ENCODE measurements at regions of chrX and their contacts with region 1.

Region 1: GRCh38 chrX:77962068-77962902 is 7.2 kb downstream of the PGAM4 start:
- DNase-seq: peak; percentile 5
- H3K4me3 Mint-ChIP-seq: peak overlapping the region; percentile 80
- H3K27ac Mint-ChIP-seq: peak overlapping the region; percentile 99
- H3K4me1 Mint-ChIP-seq: peaks cover 54% of the 10 kb centered on the region
- H3K27me3 Mint-ChIP-seq: no peaks in the 10 kb centered on the region

Region 2: DNA sequence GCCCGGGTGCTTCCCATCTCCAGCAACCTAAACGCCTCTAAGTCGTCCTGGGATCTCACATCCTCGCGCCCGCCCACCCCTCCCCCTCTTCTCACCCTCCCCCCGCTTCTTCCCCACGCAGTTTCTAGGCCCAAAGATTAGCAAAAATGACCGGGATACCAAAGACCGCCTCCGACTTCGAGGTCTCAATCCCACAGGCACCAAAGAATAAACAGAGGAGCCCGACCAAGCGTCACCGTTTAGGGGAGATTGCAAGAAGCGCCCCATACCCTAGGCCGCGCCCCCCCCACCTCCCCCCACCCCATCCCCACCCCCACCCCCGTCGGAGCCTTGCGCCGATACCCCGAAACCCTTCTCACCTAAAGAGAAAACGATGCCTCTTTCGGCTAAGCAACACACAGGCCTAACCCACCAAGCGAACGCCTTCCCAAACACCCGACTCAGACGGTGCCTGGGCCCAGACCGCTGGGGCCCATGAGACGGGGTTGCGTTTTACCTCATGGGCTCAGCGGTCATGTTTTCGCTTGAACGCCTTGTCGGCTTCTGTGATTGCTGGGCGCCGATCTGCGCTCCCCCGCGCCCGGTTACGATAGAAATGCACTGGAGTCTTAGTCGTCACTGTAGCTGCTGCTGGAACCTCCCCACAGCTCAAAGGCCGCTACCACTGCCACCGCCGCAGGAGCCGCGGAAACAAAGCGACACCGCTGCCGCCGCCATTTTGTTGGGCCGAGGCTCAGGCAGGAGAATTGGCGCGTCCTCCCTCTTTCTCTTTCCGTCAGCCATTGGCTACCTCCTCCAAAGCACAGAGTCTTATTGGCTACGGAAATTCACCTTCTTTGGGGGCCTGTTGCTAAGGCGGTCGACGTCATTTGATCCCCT is 176.6 kb before region 1 on chrX and contains the start of gene ATRX:
- intact Hi-C with region 1: loop called (anchors 2 kb)
- DNase-seq: peak; percentile 72
- H3K4me3 Mint-ChIP-seq: peak within 1 kb of the TSS; percentile 100
- H3K27ac Mint-ChIP-seq: peak within 1 kb of the TSS; percentile 100
- H3K4me1 Mint-ChIP-seq: peaks cover 33% of the 10 kb centered on the region
- H3K27me3 Mint-ChIP-seq: no peaks in the 10 kb centered on the region
- total RNA-seq, gene ATRX: 63.9 and 72.7 TPM in 2 replicates

Region 3: DNA sequence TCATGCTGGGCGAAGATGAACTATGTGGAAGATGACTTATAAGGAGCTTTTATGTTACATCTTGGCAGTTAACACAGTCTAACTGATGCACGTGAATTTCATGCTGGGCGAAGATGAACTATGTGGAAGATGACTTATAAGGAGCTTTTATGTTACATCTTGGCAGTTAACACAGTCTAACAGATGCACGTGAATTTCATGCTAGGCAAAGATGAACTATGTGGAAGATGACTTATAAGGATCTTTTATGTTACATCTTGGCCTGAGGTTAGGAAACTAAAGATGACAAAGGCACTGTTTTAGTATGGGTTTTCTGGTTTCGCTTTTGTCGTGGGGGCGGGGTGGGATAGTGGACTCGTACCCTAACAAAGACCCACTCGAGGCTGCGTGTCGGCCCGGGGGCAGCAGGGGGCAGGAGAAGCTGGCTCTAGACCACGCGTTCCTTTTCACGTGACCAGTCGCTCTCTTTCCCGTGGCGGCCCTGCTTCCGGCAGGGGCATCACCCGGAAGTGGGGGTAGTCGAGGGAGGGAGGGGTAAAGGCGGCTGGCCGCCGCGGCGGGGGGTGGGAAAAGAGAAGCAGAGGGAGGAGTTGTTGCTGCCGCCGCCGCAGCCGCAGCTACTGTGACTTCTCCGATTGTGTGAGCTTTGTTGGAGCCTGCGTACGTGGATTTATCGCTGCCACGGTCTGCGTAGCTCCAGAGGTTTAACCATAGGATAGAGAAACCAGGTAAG is 52.0 kb before region 1 on chrX and contains the start of gene ATP7A:
- intact Hi-C with region 1: loop called (anchors 1 kb)
- DNase-seq: peak; percentile 85
- H3K4me3 Mint-ChIP-seq: peak within 1 kb of the TSS; percentile 98
- H3K27ac Mint-ChIP-seq: peak within 1 kb of the TSS; percentile 97
- H3K4me1 Mint-ChIP-seq: peaks cover 16% of the 10 kb centered on the region
- H3K27me3 Mint-ChIP-seq: no peaks in the 10 kb centered on the region
- total RNA-seq, gene ATP7A: 6.1 and 6.9 TPM in 2 replicates

Region 4: DNA sequence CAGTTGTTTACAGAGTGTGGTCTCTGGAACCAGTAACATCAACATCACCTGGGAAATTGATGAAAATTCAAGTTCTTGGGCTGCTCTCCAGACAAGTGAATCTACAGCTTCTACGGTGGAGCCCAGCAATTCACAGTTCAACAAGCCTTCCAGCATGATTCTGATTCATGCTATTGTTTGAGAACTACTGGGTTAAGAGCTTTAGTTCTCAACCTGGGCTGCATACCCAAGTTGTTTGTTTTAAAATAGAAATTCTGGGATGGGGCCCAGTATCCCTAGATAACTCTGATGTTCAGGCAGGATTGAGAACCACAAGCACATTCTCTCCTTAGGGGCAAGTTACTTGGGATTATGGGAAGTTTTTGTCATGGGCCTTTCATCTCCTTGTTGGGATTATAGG is 103.8 kb after region 1 on chrX:
- intact Hi-C with region 1: loop called (anchors 1 kb)
- DNase-seq: no peak
- H3K4me3 Mint-ChIP-seq: no peak overlapping the region
- H3K27ac Mint-ChIP-seq: no peak overlapping the region
- H3K4me1 Mint-ChIP-seq: peaks cover 30% of the 10 kb centered on the region
- H3K27me3 Mint-ChIP-seq: no peaks in the 10 kb centered on the region

Region 5: DNA sequence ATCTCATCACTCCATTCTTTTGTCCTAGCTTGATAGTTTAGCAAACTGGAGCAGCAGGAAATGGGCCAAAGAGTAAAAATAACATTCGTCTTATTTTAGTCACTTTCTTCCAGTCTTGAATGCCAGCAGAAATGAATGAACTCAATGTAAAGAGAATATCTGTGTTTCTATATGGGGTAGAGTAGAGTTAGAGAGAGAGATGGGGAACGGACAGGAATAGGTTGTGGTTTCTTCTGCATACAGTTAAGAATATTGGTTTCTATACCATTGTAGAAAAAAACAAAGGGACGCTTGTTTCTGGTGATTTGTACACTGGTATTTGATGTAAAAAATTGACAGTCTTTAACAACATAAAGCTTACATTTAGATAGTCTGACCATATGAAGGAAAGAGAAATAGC is 1191.1 kb after region 1 on chrX:
- intact Hi-C with region 1: loop called (anchors 10 kb)
- DNase-seq: no peak
- H3K4me3 Mint-ChIP-seq: peak overlapping the region; percentile 73
- H3K27ac Mint-ChIP-seq: peak overlapping the region; percentile 85
- H3K4me1 Mint-ChIP-seq: peaks cover 82% of the 10 kb centered on the region
- H3K27me3 Mint-ChIP-seq: no peaks in the 10 kb centered on the region

Measured in activated T-helper 1 cell treated with anti-CD3 and anti-CD28 coated beads, Interleukin-12 subunit alpha, Interleukin-12 subunit beta, Interleukin-2, Interleukin-4 antibody, amounts not matched to agents 30 ng/mL and 10 ng/mL and 1 ng/mL, durations not matched to agents 14 hours and 24 hours and 36 hours (primary cell).